ENCODE measurements at regions of chr2 and their contacts with region 1.

Region 1: DNA sequence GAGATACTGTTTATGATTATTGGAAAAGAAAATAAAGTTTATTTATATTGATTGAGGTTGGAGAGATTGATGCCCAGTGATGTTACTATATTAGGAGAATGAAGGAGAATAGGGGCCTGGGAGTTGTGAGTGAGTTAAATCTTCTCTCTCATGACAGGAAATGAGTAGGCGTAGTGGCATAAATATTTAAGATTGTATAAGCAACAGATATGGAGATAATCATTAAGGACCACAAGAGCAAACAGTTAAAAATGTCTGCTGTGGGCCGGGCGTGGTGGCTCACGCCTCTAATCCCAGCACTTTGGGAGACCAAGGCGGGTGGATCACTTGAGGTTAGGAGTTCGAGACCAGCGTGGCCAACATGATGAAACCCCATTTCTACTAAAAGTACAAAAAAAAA is 62.7 kb downstream of the PTRHD1 start:
- DNase-seq: no peak
- ATAC-seq: peak; percentile 37 to 66 (median 50)
- H3K4me3 ChIP-seq: no peak overlapping the region
- H3K4me3 Mint-ChIP-seq: peak overlapping the region; percentile 14
- H3K27ac ChIP-seq: no peak overlapping the region
- H3K27ac Mint-ChIP-seq: peak overlapping the region; percentile 85 to 86
- H3K4me1 ChIP-seq: peaks cover 5% of the 10 kb centered on the region
- H3K4me1 Mint-ChIP-seq: peaks cover 14 to 28% of the 10 kb centered on the region in 2 donors
- H3K27me3 ChIP-seq: no peaks in the 10 kb centered on the region
- H3K27me3 Mint-ChIP-seq: no peaks in the 10 kb centered on the region
- CTCF ChIP-seq: no peak

Region 2: DNA sequence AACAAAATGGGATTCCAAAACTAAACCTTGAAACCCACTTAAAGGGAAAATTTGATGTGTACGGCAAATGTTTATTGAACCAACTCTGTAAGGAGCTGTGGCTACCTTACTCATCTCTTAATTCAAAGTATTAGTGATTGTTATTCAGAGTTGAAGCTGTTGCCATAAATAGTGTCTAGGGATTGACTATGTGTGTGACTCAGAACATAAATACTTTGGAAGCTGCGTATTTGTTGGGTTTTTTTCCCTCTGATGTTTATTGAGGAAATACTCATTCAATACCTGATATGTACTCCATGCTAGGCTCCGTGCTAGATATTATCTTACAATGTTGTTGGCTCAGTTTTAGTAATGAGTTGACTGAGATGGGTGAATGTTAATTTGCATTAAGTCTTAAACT is 27.7 kb before region 1 on chr2:
- intact Hi-C with region 1: no loop called
- DNase-seq: no peak
- ATAC-seq: no peak
- H3K4me3 ChIP-seq: no peak overlapping the region
- H3K4me3 Mint-ChIP-seq: no peak overlapping the region
- H3K27ac ChIP-seq: no peak overlapping the region
- H3K27ac Mint-ChIP-seq: no peak overlapping the region
- H3K4me1 ChIP-seq: no peaks in the 10 kb centered on the region
- H3K4me1 Mint-ChIP-seq: no peaks in the 10 kb centered on the region
- H3K27me3 ChIP-seq: no peaks in the 10 kb centered on the region
- H3K27me3 Mint-ChIP-seq: no peaks in the 10 kb centered on the region
- CTCF ChIP-seq: no peak

Region 3: GRCh38 chr2:24754985-24755705 is 24.7 kb after region 1 on chr2:
- intact Hi-C with region 1: loop called (anchors 2 kb)
- DNase-seq: no peak
- ATAC-seq: peak in 1 of 3 donors; percentile 26
- H3K4me3 ChIP-seq: no peak overlapping the region
- H3K4me3 Mint-ChIP-seq: no peak overlapping the region
- H3K27ac ChIP-seq: no peak overlapping the region
- H3K27ac Mint-ChIP-seq: no peak overlapping the region
- H3K4me1 ChIP-seq: no peaks in the 10 kb centered on the region
- H3K4me1 Mint-ChIP-seq: peaks cover 4 to 5% of the 10 kb centered on the region in 2 donors
- H3K27me3 ChIP-seq: no peaks in the 10 kb centered on the region
- H3K27me3 Mint-ChIP-seq: no peaks in the 10 kb centered on the region
- CTCF ChIP-seq: no peak

Measured in natural killer cell (primary cell).